ENCODE measurements at regions of chr17 and their contacts with region 1.

Region 1: GRCh38 chr17:1455797-1456599 is at the start of gene CRK:
- DNase-seq: peak; percentile 99
- total RNA-seq, gene CRK: 56.6 to 58.0 TPM

Region 2: GRCh38 chr17:1365445-1366039 is 90.5 kb before region 1 on chr17:
- intact Hi-C with region 1: loop called (anchors 5 to 10 kb)
- DNase-seq: no peak

Region 3: GRCh38 chr17:1374431-1375177 is 81.4 kb before region 1 on chr17:
- intact Hi-C with region 1: loop called (anchors 5 to 10 kb)
- DNase-seq: no peak